HepG2 (cell line): ENCODE measurements at regions of chr1 and their contacts with region 1.

Region 1: GRCh38 chr1:15062479-15063099 is 91.0 kb upstream of the TMEM51 start:
- DNase-seq: no peak
- ATAC-seq: no peak
- H3K4me3 ChIP-seq: no peak overlapping the region
- H3K27ac ChIP-seq: no peak overlapping the region
- H3K4me1 ChIP-seq: no peaks in the 10 kb centered on the region
- H3K27me3 ChIP-seq: no peaks in the 10 kb centered on the region
- CTCF ChIP-seq: peak; percentile 65
- EP300 ChIP-seq: no peak
- POLR2A ChIP-seq: no peak
- RAD21 ChIP-seq: 0 out of 2 replicates have a peak, but pooled peaks have one; percentile 12

Region 2: GRCh38 chr1:15046487-15047165 is 16.0 kb before region 1 on chr1:
- CTCF ChIA-PET with region 1: no interaction called
- POLR2A ChIA-PET with region 1: no interaction called
- in situ Hi-C with region 1: no loop called
- intact Hi-C with region 1: no loop called
- DNase-seq: peak; percentile 48
- ATAC-seq: peak; percentile 78
- H3K4me3 ChIP-seq: no peak overlapping the region
- H3K27ac ChIP-seq: no peak overlapping the region
- H3K4me1 ChIP-seq: no peaks in the 10 kb centered on the region
- H3K27me3 ChIP-seq: no peaks in the 10 kb centered on the region
- CTCF ChIP-seq: peak; percentile 88
- EP300 ChIP-seq: no peak
- POLR2A ChIP-seq: no peak
- RAD21 ChIP-seq: peak; percentile 79

Region 3: GRCh38 chr1:15100121-15100874 is 37.7 kb after region 1 on chr1:
- CTCF ChIA-PET with region 1: interaction called, 13 read pairs
- POLR2A ChIA-PET with region 1: no interaction called
- in situ Hi-C with region 1: no loop called
- intact Hi-C with region 1: loop called (anchors 1 kb)
- DNase-seq: peak; percentile 20
- ATAC-seq: peak; percentile 79
- H3K4me3 ChIP-seq: no peak overlapping the region
- H3K27ac ChIP-seq: no peak overlapping the region
- H3K4me1 ChIP-seq: no peaks in the 10 kb centered on the region
- H3K27me3 ChIP-seq: peaks cover 0 to 52% of the 10 kb centered on the region in 2 experiments; a peak in 3 of 5 replicates
- CTCF ChIP-seq: peak; percentile 96
- EP300 ChIP-seq: no peak
- POLR2A ChIP-seq: no peak
- RAD21 ChIP-seq: peak; percentile 85